Activated CD4-positive, alpha-beta T cell treated with anti-CD3 and anti-CD28 coated beads, Interleukin-2, amount 10 ng/mL, durations not matched to agents 24 days and 14 days (primary cell): ENCODE measurements at regions of chr16 and their contacts with region 1.

Region 1: GRCh38 chr16:74372953-74373846 is 2.9 kb upstream of the NPIPB15 start:
- DNase-seq: peak; percentile 63
- H3K4me3 Mint-ChIP-seq: no peak overlapping the region
- H3K27ac Mint-ChIP-seq: no peak overlapping the region
- H3K4me1 Mint-ChIP-seq: peaks cover 1% of the 10 kb centered on the region
- H3K27me3 Mint-ChIP-seq: no peaks in the 10 kb centered on the region

Region 2: GRCh38 chr16:74296432-74297144 is 76.6 kb before region 1 on chr16 and contains the start of gene PSMD7:
- intact Hi-C with region 1: loop called (anchors 1 kb)
- DNase-seq: peak; percentile 97
- H3K4me3 Mint-ChIP-seq: peak within 1 kb of the TSS; percentile 89
- H3K27ac Mint-ChIP-seq: peak within 1 kb of the TSS; percentile 89
- H3K4me1 Mint-ChIP-seq: peaks cover 18% of the 10 kb centered on the region
- H3K27me3 Mint-ChIP-seq: no peaks in the 10 kb centered on the region
- total RNA-seq, gene PSMD7: 174 and 178 TPM in 2 replicates

Region 3: GRCh38 chr16:74438492-74439041 is 65.4 kb after region 1 on chr16:
- intact Hi-C with region 1: loop called (anchors 10 kb)
- DNase-seq: peak; percentile 75
- H3K4me3 Mint-ChIP-seq: peak overlapping the region; percentile 71
- H3K27ac Mint-ChIP-seq: peak overlapping the region; percentile 75
- H3K4me1 Mint-ChIP-seq: peaks cover 20% of the 10 kb centered on the region
- H3K27me3 Mint-ChIP-seq: no peaks in the 10 kb centered on the region